CD8-positive, alpha-beta T cell (primary cell): ENCODE measurements at regions of chr20 and their contacts with region 1.

Region 1: GRCh38 chr20:40781327-40782042 is 92.4 kb upstream of the MAFB start:
- DNase-seq: no peak
- ATAC-seq: no peak
- H3K4me3 ChIP-seq: no peak overlapping the region
- H3K4me3 Mint-ChIP-seq: no peak overlapping the region
- H3K27ac ChIP-seq: no peak overlapping the region
- H3K27ac Mint-ChIP-seq: no peak overlapping the region
- H3K4me1 ChIP-seq: no peaks in the 10 kb centered on the region
- H3K4me1 Mint-ChIP-seq: no peaks in the 10 kb centered on the region
- H3K27me3 ChIP-seq: no peaks in the 10 kb centered on the region
- H3K27me3 Mint-ChIP-seq: peaks cover 2% of the 10 kb centered on the region
- CTCF ChIP-seq: no peak

Region 2: GRCh38 chr20:41086402-41087338 is 305.2 kb after region 1 on chr20:
- CTCF ChIA-PET with region 1: no interaction called
- POLR2A ChIA-PET with region 1: no interaction called
- intact Hi-C with region 1: loop called in 1 of 2 experiments (anchors 5 kb)
- DNase-seq: peak in 1 of 9 experiments; percentile 16
- ATAC-seq: no peak
- H3K4me3 ChIP-seq: no peak overlapping the region
- H3K4me3 Mint-ChIP-seq: no peak overlapping the region
- H3K27ac ChIP-seq: peak overlapping the region in 1 of 2 experiments; percentile 23
- H3K27ac Mint-ChIP-seq: peak overlapping the region; percentile 16
- H3K4me1 ChIP-seq: peaks cover 7% of the 10 kb centered on the region
- H3K4me1 Mint-ChIP-seq: peaks cover 19% of the 10 kb centered on the region
- H3K27me3 ChIP-seq: no peaks in the 10 kb centered on the region
- H3K27me3 Mint-ChIP-seq: no peaks in the 10 kb centered on the region
- CTCF ChIP-seq: no peak